ENCODE measurements at regions of chr10 and their contacts with region 1.

Region 1: DNA sequence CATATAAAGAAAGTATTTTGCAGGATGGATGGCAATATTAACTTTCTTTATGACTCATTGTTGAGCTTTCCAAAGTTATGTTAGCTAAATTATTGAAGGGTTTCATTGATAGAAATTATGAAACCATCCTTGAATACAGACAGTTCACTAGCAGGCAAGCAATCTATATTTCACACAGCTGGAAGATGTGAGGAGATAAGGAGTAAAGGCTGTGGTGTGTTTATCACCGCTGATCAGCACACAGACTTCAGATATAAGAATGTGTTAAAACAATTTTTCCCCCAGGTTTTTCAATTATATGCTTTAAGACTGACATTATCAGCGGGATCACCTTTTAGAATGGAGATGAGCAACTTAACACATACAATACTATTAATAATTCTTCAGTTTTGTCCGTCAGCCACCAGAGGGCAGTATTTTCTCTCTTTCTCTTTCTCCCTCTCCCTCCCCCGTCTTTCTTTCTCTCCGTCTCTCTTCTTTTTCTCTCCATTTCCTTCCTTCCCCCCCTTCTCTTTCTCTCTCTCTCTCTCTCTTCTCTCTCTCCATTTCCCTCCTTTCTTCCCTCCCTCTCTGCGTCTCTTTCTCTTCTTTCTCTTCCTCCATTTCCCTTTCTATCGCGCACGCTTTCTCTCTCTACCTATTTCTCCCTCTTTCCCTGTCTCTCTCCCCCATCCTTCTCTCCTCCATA is 62.9 kb upstream of the FAM171A1 start:
- DNase-seq: no peak
- ATAC-seq: peak; percentile 70 to 86
- H3K4me3 ChIP-seq: peak overlapping the region; percentile 39 to 50 (median 41)
- H3K27ac ChIP-seq: no peak overlapping the region
- H3K4me1 ChIP-seq: peaks cover 0 to 4% of the 10 kb centered on the region in 2 donors
- H3K27me3 ChIP-seq: no peaks in the 10 kb centered on the region
- CTCF ChIP-seq: peak; percentile 32 to 70 (median 57)
- POLR2A ChIP-seq: no peak

Region 2: GRCh38 chr10:15744217-15744865 is 310.3 kb after region 1 on chr10:
- in situ Hi-C with region 1: loop called in 1 of 4 experiments (anchors 25 kb)
- intact Hi-C with region 1: no loop called
- DNase-seq: no peak
- ATAC-seq: no peak
- H3K4me3 ChIP-seq: no peak overlapping the region
- H3K27ac ChIP-seq: no peak overlapping the region
- H3K4me1 ChIP-seq: peaks cover 0 to 2% of the 10 kb centered on the region in 2 donors
- H3K27me3 ChIP-seq: no peaks in the 10 kb centered on the region
- CTCF ChIP-seq: peak in 2 of 5 experiments; percentile 24 to 38
- POLR2A ChIP-seq: no peak

Measured in gastrocnemius medialis (tissue), 4 donors.